ENCODE measurements at regions of chr15 and their contacts with region 1.

Region 1: DNA sequence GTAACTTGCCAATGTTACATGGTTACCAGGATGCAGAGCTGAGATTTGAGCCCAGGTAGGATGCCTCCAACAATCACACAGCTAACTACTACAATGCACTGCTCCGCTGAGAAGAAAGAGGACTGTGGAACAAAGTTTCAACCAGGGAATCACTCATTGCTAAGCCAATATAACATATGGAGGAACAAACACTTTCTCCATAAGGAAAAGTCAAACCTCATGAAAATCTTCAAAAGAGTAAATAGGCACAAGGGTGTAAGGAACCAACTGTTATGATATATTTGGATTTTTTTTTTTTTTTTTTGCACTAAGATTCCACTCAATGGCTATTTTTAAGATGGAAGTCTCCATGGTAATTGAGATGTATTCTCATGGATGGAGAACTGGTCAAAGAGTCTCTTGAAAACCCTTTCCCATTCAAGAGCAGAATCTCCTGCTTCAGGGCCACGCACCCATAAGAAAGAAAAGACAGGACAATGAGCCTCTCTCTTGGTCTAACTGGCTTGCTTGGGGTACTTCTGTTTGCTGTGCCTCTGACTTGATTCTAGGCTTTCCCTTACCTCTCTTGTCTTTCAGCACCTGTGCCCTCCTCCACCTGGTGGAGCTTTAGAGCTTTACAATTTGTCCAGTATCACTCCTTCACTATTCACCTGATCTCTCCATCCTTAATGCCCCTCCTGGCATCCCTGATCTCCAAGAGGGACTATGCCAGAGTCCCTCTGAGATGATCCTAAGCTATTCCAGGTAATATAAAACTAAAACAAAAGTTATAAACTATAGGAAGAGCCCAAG is 252.8 kb downstream of the NTRK3 start:
- DNase-seq: no peak
- H3K4me3 ChIP-seq: no peak overlapping the region
- H3K27ac ChIP-seq: no peak overlapping the region
- H3K4me1 ChIP-seq: no peaks in the 10 kb centered on the region
- H3K27me3 ChIP-seq: no peaks in the 10 kb centered on the region
- CTCF ChIP-seq: no peak
- POLR2A ChIP-seq: no peak

Region 2: DNA sequence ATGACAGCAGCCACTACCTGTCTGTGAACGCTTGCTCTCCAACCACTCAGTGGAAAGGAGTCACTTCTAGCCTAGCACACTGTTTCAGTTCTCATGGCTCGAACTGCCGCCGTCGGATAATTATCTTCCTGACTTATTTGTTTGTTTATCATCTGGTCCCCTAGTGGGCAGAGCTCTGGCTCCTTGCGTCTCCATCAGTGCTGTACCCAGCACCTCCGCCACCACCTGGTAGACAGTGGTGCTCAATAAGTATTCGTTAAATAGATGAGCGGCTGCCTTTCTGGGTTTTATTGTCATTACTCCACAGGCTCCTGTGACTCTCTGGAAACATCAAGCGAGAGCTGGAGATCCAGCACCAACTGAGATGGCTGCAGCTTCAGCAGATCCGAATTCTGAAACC is 44.7 kb before region 1 on chr15:
- intact Hi-C with region 1: loop called (anchors 10 kb)
- DNase-seq: no peak
- H3K4me3 ChIP-seq: no peak overlapping the region
- H3K27ac ChIP-seq: no peak overlapping the region
- H3K4me1 ChIP-seq: no peaks in the 10 kb centered on the region
- H3K27me3 ChIP-seq: no peaks in the 10 kb centered on the region
- CTCF ChIP-seq: no peak
- POLR2A ChIP-seq: no peak

Region 3: GRCh38 chr15:88049506-88049905 is 45.8 kb after region 1 on chr15:
- intact Hi-C with region 1: no loop called
- DNase-seq: no peak
- H3K4me3 ChIP-seq: no peak overlapping the region
- H3K27ac ChIP-seq: no peak overlapping the region
- H3K4me1 ChIP-seq: no peaks in the 10 kb centered on the region
- H3K27me3 ChIP-seq: peaks cover 5% of the 10 kb centered on the region
- CTCF ChIP-seq: no peak
- POLR2A ChIP-seq: no peak

Region 4: DNA sequence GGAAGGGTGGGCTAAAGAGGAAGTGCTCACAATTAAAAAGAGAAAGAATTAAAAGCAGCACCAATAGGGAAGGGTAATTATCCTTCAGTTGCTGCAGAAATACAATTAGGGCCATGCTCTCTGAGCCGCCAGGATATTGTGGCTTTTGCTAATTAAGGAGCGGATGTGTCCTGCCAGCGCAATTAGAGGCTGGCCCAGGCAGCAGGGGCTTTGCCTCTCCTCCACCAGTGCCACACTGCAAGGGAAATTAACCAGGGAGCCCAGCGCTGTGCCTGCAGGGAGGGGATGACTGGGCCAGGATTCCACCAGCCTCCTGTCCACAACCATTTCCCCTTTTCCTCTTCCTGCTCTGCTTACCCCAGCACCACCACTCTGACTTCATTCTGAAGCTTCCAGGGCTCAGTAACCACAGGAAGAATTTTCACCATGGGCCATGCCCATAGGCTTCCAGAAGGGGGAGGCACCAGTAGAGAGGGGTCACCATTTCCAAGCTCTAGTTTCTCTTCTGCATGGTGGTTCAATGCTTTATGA is 607.0 kb after region 1 on chr15:
- intact Hi-C with region 1: no loop called
- DNase-seq: no peak
- H3K4me3 ChIP-seq: no peak overlapping the region
- H3K27ac ChIP-seq: no peak overlapping the region
- H3K4me1 ChIP-seq: no peaks in the 10 kb centered on the region
- H3K27me3 ChIP-seq: peaks cover 14% of the 10 kb centered on the region
- CTCF ChIP-seq: no peak
- POLR2A ChIP-seq: no peak

Measured in prostate gland (tissue), 2 donors.